ENCODE measurements at regions of chr12 and their contacts with region 1.

Region 1: DNA sequence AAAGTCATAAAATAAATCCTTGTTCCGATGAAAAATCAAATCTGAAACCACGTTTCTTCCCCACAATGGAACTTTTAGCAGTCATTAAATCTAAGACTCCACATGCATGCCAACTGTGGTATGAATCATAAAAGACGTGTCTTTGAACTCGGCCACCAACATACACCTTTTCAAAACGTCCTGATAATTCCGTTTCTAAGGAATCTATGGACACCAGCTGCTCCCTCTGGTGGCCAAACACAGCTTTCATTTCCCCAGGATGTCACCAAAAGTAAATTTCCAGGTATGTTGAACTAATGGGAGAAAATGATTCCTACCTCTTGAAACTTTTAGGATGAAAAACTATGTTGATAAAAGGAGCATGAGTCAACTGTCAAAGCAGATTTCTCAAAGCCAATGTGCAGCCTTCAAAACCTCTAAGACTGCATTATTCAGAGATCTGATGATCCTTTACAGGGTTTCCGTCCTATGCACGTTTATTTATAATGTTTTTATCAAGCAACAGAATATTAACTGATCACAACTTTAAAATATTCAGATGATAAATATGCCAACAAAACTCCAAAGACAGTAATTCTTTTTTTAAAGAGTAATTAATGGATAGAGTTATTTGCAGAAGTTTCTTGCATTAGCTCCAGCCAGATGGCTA is 96.2 kb downstream of the CIT start:
- DNase-seq: peak; percentile 39
- ATAC-seq: peak; percentile 77
- H3K4me3 ChIP-seq: no peak overlapping the region
- H3K27ac ChIP-seq: no peak overlapping the region
- H3K4me1 ChIP-seq: peaks cover 6% of the 10 kb centered on the region in 2 experiments; a peak in 3 of 4 replicates
- H3K27me3 ChIP-seq: no peaks in the 10 kb centered on the region
- CTCF ChIP-seq: peak; percentile 64 to 93 (median 86)
- POLR2A ChIP-seq: no peak
- RAD21 ChIP-seq: peak; percentile 56

Region 2: DNA sequence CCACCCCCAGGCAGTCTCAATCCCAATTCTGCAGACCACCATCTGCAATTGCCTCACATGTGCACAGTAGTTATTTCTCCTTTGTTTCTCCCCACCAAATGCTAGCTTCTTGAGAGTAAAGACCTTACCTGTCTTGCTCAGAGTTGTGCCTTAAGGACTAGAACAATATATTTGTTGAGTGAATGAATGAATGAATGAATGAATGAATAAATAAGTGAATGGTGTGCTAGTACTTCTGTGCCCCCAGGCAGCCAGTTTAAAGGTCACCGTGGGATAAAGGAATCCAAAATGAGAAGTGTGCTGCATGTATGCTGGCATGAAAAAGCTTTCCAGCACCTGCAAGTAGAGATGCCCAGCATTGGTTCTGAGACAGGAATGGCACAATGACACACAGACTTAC is 13.2 kb after region 1 on chr12:
- CTCF ChIA-PET with region 1: interaction called, 10 read pairs
- POLR2A ChIA-PET with region 1: no interaction called
- RAD21 ChIA-PET with region 1: no interaction called
- intact Hi-C with region 1: no loop called
- DNase-seq: no peak
- ATAC-seq: no peak
- H3K4me3 ChIP-seq: no peak overlapping the region
- H3K27ac ChIP-seq: no peak overlapping the region
- H3K4me1 ChIP-seq: no peaks in the 10 kb centered on the region
- H3K27me3 ChIP-seq: no peaks in the 10 kb centered on the region
- CTCF ChIP-seq: no peak
- POLR2A ChIP-seq: no peak
- RAD21 ChIP-seq: no peak